Common myeloid progenitor, CD34-positive (primary cell): ENCODE measurements at regions of chr1 and their contacts with region 1.

Region 1: GRCh38 chr1:16187748-16188401 is 24.6 kb downstream of the ARHGEF19 start:
- DNase-seq: peak; percentile 61 to 78 (median 70)
- H3K4me3 ChIP-seq: no peak overlapping the region
- H3K27ac ChIP-seq: no peak overlapping the region
- H3K4me1 ChIP-seq: no peaks in the 10 kb centered on the region
- H3K27me3 ChIP-seq: peaks cover 0 to 6% (median 0%) of the 10 kb centered on the region in 5 experiments

Region 2: DNA sequence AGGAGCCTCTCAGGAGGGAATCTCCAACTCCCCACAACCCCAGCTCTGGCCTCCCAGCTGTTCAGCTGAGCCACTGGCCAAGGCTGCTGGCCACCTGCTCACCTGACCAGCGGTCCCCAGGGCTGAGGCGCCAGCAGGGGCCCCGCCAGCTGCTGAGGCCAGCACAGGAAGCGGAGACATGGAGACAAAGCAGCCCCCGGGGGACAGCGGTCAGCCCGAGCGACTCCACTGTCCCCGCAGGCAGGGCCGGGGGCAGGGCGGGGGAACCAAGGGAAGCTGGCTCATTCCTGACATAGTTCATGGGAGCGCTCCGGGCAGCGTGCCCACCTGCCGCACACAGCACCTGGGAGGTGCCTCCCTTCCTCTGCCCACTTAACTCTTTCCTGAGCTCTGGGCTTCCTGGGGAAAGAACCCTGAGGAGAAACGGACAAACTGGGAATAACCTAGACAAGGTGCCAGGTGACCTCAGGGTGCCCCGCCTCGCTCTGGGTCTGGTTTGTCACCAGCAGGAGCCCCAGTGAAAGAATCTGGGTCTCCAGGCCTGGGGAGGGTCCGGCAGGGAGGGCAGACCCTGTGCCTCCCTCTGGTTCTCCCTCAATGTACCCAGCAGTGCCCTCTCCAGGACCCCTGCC is 42.7 kb before region 1 on chr1:
- CTCF ChIA-PET with region 1: no interaction called
- POLR2A ChIA-PET with region 1: no interaction called
- DNase-seq: no peak
- H3K4me3 ChIP-seq: no peak overlapping the region
- H3K27ac ChIP-seq: no peak overlapping the region
- H3K4me1 ChIP-seq: peaks cover 0 to 28% (median 18%) of the 10 kb centered on the region in 4 experiments
- H3K27me3 ChIP-seq: peaks cover 0 to 14% (median 0%) of the 10 kb centered on the region in 5 experiments

Region 3: DNA sequence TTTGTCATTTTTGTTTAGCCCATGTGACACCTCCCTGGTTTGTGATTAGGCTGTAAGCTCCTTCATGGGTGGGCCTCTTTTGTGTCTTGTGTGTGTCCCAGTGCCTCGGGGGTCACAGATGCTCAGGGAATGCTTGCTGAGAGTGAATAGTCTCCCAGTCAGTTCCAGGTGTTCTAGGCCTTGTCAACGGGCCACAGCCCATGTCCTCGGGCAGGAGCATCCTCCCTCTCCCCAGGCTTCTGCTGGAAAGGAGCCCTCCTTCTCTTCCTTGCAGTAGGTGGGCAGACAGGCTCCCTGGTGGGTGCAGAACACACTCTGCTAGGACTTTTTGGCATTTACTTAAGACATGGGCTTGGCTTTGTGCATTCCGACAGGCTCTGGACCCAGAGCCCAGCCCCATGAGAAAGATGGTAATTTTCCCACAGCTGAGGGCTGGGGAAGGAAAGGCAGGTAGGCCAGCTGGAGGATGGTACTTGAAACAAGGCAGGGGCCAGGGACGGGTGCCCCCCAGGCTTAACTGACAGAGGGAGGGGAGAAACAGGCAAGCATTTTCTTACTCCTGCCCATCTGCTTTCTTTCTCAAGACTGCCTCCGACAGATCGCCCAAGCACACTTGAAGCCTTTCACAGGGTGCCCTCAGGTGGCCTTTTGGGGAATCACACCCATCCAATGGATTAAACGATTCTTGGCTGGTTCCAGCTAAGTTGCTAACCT is 56.2 kb after region 1 on chr1:
- CTCF ChIA-PET with region 1: interaction called, 21 read pairs
- POLR2A ChIA-PET with region 1: no interaction called
- DNase-seq: peak; percentile 80 to 91 (median 86)
- H3K4me3 ChIP-seq: no peak overlapping the region
- H3K27ac ChIP-seq: no peak overlapping the region
- H3K4me1 ChIP-seq: peaks cover 17 to 33% (median 23%) of the 10 kb centered on the region in 4 experiments
- H3K27me3 ChIP-seq: no peaks in the 10 kb centered on the region